CD4-positive, alpha-beta T cell (primary cell): ENCODE measurements at regions of chr20 and their contacts with region 1.

Region 1: GRCh38 chr20:63580796-63581461 is 6.9 kb upstream of the HELZ2 start:
- DNase-seq: peak; percentile 62 to 87 (median 76)
- ATAC-seq: peak; percentile 99
- H3K4me3 ChIP-seq: no peak overlapping the region
- H3K4me3 Mint-ChIP-seq: no peak overlapping the region
- H3K27ac ChIP-seq: no peak overlapping the region
- H3K27ac Mint-ChIP-seq: peak overlapping the region; percentile 19
- H3K4me1 ChIP-seq: peaks cover 10% of the 10 kb centered on the region
- H3K4me1 Mint-ChIP-seq: peaks cover 20% of the 10 kb centered on the region
- H3K27me3 ChIP-seq: no peaks in the 10 kb centered on the region
- H3K27me3 Mint-ChIP-seq: no peaks in the 10 kb centered on the region
- CTCF ChIP-seq: peak; percentile 63

Region 2: DNA sequence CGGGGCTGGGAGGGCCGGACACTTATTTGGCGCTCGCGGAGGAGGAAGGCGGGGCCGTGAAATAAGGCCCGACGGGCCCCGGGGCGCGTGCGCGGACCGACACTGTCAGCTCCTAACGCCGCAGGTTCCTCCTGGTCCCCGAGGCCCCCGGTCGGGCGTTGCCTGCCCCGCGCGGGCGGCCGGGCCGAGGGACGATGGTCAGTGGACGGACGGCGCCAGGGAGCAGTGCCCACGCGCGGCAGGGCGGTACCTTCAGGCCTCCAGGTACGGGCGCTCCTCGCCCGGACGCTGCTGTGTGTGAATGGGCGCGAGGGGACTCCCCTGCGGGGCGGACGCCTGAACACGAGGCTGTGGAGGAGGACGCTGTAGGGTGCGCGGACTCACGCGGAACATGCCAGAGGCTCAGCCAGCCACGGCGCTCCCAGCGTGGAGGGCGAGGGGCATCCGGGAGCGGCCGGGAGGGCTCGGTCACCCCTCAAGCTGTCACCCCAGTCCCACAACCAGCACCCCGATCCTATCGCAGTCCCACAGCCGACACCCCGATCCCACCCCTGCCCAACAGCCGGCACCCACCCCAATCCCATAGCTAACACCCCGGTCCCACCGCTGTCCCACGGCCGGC is 46.3 kb after region 1 on chr20:
- CTCF ChIA-PET with region 1: no interaction called
- POLR2A ChIA-PET with region 1: no interaction called
- intact Hi-C with region 1: loop called in 1 of 2 experiments (anchors 5 kb)
- DNase-seq: peak in 13 of 14 experiments; percentile 88 to 97 (median 95)
- ATAC-seq: peak; percentile 77
- H3K4me3 ChIP-seq: peak overlapping the region; percentile 95
- H3K4me3 Mint-ChIP-seq: peak overlapping the region; percentile 98
- H3K27ac ChIP-seq: peak overlapping the region; percentile 81 to 89
- H3K27ac Mint-ChIP-seq: peak overlapping the region; percentile 90
- H3K4me1 ChIP-seq: peaks cover 52% of the 10 kb centered on the region
- H3K4me1 Mint-ChIP-seq: peaks cover 38% of the 10 kb centered on the region
- H3K27me3 ChIP-seq: no peaks in the 10 kb centered on the region
- H3K27me3 Mint-ChIP-seq: no peaks in the 10 kb centered on the region
- CTCF ChIP-seq: no peak